ENCODE measurements at regions of chr2 and their contacts with region 1.

Region 1: DNA sequence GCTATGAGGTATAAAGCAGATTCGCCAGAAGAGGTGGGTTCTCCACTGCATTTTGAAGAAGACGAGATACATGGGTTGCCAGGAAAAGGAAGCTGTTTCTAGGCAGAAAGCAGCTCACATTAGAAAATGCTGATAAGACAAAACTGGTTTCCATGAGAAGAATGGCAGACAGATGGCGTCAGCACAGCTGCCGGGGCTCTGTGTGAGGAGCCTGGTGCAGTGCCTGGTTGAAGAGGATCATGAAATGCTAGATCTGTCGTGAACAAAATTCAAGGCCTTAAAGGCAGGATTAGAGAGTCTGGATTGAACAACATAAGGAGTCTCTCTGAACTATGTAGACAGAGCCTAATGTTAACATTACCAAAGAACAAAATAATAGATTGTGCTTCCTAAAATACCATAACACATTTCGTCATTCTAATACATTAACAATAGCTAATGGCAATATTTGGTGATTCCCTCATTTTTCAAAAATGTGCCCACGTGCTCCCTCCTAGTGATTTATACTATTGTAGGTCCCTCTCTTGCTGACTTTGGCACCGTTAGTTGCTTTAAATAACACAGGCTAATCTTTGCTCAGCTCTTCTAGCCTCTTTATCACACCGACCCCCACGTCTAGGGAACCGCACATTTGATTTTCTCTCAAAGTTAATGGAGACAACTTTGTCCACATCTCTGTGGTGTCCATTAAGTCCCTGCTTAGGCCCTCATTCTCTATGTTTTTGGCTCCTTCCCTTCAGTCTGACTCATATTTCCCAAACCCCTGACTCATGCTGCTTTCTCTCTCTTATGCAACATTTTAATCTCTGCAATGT is 38.2 kb downstream of the EFEMP1 start:
- DNase-seq: no peak

Region 2: GRCh38 chr2:55901941-55902340 is 16.6 kb after region 1 on chr2:
- intact Hi-C with region 1: loop called in 1 of 2 experiments (anchors 1 kb)
- DNase-seq: no peak

Region 3: DNA sequence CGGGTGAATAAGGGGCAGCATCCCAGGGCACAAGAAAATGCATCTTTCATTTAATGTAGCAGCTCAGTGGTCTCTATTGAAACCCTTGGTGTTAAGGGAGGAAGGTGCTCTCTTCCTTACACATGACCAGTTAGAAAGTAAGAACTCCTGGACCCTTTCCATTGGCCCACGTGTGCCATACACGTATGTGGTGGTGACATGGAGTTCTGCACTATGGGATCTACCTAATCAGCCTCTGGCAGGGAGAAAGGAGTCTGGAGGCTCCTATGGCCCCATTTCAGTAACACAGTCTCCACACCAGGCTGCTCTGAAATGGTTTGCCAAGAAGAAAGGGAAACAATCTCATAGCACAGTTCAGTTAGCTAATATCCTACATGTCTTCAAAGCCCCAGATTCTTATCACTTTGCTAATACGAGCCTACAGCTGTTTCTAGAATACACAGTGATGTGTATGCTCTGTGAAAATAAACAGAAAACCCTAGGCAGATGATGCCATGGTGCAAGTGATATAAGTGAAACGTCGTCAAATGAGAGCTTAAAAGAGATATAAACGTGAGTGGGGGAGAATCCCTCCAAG is 31.2 kb after region 1 on chr2:
- intact Hi-C with region 1: no loop called
- DNase-seq: no peak